Dorsolateral prefrontal cortex (tissue), 120 donors: ENCODE measurements at regions of chr4 and their contacts with region 1.

Region 1: DNA sequence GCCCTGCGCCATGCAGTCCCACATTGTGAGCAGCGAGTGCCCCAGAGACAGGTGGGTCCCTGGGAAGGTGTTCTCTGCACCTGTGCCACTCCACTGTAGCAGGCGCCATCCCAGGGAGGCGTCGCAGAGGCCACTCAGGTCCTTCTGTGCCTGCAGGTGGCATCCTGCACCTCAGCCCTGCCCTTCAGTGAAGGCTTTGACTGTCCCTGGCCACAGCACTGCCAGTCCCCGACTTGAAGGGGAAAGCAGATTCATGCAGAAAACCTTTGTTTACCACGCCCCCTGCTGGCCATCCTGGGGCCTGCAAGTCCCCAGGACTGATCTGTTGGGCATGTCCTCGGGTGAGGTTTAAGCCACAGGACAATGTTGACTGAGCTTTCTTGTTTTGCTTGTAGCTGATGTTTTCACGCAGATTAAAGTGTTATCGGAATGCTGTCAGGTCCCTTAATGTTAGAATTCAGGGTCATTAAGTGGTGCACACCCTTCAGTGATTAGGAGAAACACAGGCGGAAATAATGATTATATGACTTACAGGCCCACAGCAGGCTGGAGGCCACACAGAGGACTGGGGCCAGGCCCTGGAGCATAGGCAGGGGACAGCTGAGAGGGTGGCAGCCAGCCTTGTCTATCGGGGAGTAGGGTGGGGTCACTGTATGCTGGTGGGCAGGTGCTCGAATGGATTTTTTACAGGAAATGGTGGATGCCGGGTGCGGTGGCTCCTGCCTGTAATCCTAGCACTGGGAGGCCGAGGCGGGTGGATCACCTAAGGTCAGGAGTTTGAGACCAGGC is 5.0 kb downstream of the TACC3 start:
- DNase-seq: peak; percentile 86 to 98 (median 92)
- H3K4me3 ChIP-seq: no peak overlapping the region
- H3K27ac ChIP-seq: peak overlapping the region in 22 of 59 donors; percentile 6 to 68 (median 36)
- H3K27me3 ChIP-seq: no peaks in the 10 kb centered on the region
- CTCF ChIP-seq: peak; percentile 80 to 100 (median 97)

Region 2: GRCh38 chr4:1463088-1463926 is 263.0 kb before region 1 on chr4:
- intact Hi-C with region 1: no loop called
- DNase-seq: peak in 2 of 10 donors; percentile 29 to 38
- H3K4me3 ChIP-seq: no peak overlapping the region
- H3K27ac ChIP-seq: no peak overlapping the region
- H3K27me3 ChIP-seq: peaks cover 0 to 69% (median 23%) of the 10 kb centered on the region in 45 donors
- CTCF ChIP-seq: no peak

Region 3: DNA sequence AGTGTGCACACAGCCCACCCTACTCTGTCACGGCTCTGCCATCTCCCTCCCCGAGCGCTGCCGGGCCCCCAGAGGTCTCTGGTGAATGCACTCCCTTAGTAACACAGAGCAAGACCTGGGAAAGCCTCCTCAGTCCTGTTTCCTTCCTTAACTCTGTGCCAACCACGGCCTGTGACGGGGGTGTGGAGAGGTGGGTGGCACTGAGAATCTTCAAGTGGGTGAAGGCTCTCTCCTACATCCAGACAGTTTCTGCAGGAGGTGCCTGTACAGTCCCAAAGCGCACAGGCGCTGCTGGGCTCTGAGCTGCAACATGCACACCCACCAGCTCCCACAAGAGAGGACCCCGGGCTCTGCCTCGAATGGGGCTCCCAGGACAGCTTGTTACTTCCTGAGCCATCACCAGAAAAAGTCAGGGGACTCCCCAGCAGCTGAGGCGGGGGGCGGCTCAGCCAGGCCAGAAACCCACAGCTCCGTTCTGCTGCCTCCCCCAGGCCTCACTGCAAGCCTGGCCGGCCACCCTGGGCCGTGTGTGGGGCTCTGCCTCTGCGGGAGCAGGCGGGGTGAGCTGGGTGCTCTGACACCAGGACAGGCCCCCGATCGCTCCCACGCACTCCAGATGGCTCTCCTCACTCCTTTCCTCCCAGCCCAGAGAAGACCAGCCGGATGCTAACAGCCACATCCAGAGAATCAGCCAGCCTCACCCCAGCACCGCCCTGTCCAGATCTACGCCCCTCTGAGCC is 72.0 kb before region 1 on chr4:
- intact Hi-C with region 1: no loop called
- DNase-seq: no peak
- H3K4me3 ChIP-seq: no peak overlapping the region
- H3K27ac ChIP-seq: no peak overlapping the region
- H3K27me3 ChIP-seq: no peaks in the 10 kb centered on the region
- CTCF ChIP-seq: no peak

Region 4: GRCh38 chr4:1693129-1693896 is 33.0 kb before region 1 on chr4:
- intact Hi-C with region 1: loop called (anchors 2 to 5 kb)
- DNase-seq: peak in 6 of 10 donors; percentile 43 to 73 (median 60)
- H3K4me3 ChIP-seq: no peak overlapping the region
- H3K27ac ChIP-seq: no peak overlapping the region
- H3K27me3 ChIP-seq: no peaks in the 10 kb centered on the region
- CTCF ChIP-seq: peak; percentile 68 to 95 (median 89)